ENCODE measurements at regions of chrX and their contacts with region 1.

Region 1: GRCh38 chrX:107710617-107711391 is 64.8 kb downstream of the TSC22D3 start:
- DNase-seq: peak; percentile 86
- H3K4me3 Mint-ChIP-seq: peak overlapping the region; percentile 20
- H3K27ac Mint-ChIP-seq: peak overlapping the region; percentile 97
- H3K4me1 Mint-ChIP-seq: peaks cover 14% of the 10 kb centered on the region
- H3K27me3 Mint-ChIP-seq: peaks cover 34% of the 10 kb centered on the region
- CTCF ChIP-seq: no peak

Region 2: GRCh38 chrX:107421408-107421807 is 289.4 kb before region 1 on chrX:
- CTCF ChIA-PET with region 1: no interaction called
- POLR2A ChIA-PET with region 1: no interaction called
- intact Hi-C with region 1: no loop called
- DNase-seq: no peak
- H3K4me3 Mint-ChIP-seq: no peak overlapping the region
- H3K27ac Mint-ChIP-seq: no peak overlapping the region
- H3K4me1 Mint-ChIP-seq: no peaks in the 10 kb centered on the region
- H3K27me3 Mint-ChIP-seq: peaks cover 84% of the 10 kb centered on the region
- CTCF ChIP-seq: no peak

Region 3: DNA sequence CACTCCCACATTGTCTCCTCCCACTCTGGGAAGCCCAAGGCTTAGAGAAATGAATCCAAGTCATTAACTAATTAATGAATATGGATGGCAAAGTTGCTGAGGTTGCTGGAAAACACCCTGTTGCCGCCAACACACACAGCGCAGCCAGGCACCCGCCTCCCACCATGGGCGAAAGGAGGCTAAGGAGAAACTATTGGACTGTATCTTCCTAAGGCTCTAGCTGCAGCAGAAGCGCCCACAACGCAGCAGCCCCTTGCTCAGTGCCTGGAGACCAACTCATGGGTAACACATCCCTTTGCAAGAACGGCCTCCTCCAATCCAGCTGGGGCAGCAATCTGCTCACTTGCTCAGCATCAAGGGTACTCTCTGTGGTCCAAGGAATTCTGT is 30.6 kb after region 1 on chrX:
- CTCF ChIA-PET with region 1: interaction called, 3 read pairs
- POLR2A ChIA-PET with region 1: interaction called, 75 read pairs
- intact Hi-C with region 1: no loop called
- DNase-seq: no peak
- H3K4me3 Mint-ChIP-seq: no peak overlapping the region
- H3K27ac Mint-ChIP-seq: peak overlapping the region; percentile 93
- H3K4me1 Mint-ChIP-seq: peaks cover 37% of the 10 kb centered on the region
- H3K27me3 Mint-ChIP-seq: peaks cover 54% of the 10 kb centered on the region
- CTCF ChIP-seq: no peak

Region 4: GRCh38 chrX:107747596-107748161 is 36.9 kb after region 1 on chrX:
- CTCF ChIA-PET with region 1: interaction called, 3 read pairs
- POLR2A ChIA-PET with region 1: interaction called, 75 read pairs
- intact Hi-C with region 1: no loop called
- DNase-seq: peak; percentile 68
- H3K4me3 Mint-ChIP-seq: peak overlapping the region; percentile 5
- H3K27ac Mint-ChIP-seq: peak overlapping the region; percentile 88
- H3K4me1 Mint-ChIP-seq: peaks cover 27% of the 10 kb centered on the region
- H3K27me3 Mint-ChIP-seq: peaks cover 61% of the 10 kb centered on the region
- CTCF ChIP-seq: no peak

Measured in MCF 10A (cell line).